PC-9 (cell line): ENCODE measurements at regions of chr20 and their contacts with region 1.

Region 1: DNA sequence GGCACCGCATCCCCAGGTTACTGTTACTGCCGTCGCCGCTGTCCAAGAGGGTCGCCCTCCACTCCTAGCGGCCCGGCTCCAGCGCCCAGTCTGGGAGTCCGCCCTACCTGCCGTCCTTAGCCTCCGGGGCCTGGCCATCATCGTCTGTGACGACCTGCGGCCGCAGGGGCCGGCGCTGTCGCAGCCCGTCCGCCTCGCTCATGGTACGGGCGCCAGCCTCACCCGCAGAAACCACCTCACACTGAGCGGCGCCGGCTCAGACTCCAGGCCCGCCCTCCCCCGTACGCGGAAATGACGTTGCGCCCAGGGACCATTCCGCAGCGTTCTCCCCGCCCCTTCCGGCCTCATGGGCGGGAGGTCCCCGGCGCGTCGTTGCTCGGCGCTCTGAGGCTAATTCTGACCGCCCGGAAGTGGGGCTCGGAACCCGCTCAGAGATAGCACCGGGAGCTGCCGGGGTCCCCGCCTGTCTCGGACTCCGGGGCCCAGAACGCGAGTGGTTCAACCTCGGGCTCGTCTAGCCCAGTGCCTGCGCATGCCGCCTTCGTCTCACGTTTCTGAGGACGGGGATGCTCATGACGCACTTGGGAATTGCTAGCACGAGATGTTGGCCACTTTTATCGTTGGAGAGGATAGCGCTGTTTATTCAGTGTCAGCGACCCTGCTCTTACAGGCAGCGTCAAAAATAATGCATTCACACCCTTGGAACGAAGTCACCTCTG is at the start of gene APMAP:
- DNase-seq: peak; percentile 75 to 93
- H3K4me3 ChIP-seq: peak within 1 kb of the TSS; percentile 71
- H3K27ac ChIP-seq: peak within 1 kb of the TSS; percentile 54
- H3K4me1 ChIP-seq: peaks cover 49% of the 10 kb centered on the region
- H3K27me3 ChIP-seq: no peaks in the 10 kb centered on the region
- CTCF ChIP-seq: no peak
- total RNA-seq, gene APMAP: 96.6 and 103 TPM in 2 replicates

Region 2: DNA sequence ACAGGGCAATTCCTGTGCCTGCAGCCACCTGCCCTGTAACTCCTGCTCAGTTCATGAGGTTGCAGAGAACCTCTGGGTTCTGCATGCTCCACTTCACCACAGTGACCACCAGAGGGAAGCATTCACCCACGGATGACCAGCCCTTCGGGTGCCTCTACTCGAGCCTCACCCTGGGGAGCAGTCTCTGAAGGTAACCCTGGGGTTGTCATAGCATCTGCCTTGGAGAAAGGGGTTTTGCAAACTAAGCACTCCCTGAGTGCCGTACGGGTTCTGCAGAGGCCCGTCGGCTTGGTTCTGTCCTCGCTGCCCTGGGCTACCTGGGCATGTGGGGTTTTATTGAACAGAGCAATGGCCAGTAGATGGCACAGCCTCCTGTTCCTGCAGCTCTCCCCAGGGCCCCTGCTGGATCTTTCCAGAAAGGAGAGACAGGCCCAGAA is 1102.9 kb before region 1 on chr20:
- CTCF ChIA-PET with region 1: no interaction called
- POLR2A ChIA-PET with region 1: no interaction called
- intact Hi-C with region 1: loop called (anchors 2 kb)
- DNase-seq: peak; percentile 63 to 83
- H3K4me3 ChIP-seq: no peak overlapping the region; the same call in 1 of the 2 replicates
- H3K27ac ChIP-seq: no peak overlapping the region
- H3K4me1 ChIP-seq: peaks cover 14% of the 10 kb centered on the region
- H3K27me3 ChIP-seq: no peaks in the 10 kb centered on the region
- CTCF ChIP-seq: peak; percentile 96

Region 3: DNA sequence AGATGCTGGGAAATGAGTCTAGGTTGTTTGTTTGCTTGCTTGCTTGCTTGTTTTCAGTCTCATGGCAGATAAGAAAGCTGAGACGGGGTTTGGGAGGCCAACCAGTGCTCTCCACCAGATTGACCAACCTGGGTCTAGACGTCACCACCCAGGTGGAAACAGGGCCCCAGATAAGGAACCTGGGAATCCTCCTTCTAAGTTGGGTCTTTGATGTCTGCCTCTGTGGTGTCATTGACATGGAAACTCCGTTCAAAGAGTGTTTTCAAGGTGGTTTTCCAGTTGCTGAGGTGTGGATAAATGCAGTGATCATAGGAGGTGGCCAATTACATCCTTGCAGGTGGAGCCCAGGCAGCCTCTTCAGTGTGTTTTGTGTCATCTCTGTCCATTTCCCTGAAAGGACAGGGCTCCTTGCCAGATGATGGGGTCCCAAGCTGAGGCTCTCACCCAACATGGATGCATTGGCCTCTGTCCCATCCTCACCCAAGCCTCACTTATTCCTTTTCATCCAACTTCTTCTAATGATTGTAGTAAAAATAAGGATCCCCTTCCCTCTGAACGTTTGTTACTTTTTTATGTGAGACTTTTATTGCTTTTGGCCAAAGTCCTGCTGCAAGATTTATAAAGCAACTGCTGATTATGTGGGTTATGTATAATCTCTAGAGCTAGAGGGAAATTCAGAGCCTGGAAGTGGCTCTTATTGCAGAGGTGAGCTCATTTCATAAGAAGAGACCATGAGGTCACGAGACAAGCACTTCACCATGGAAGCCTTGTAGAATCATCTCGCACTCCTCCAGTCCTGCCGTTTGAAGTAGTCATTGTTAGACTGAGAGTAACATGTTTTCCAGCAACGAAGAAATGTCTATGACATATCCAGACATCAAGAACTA is 555.2 kb before region 1 on chr20:
- CTCF ChIA-PET with region 1: no interaction called
- POLR2A ChIA-PET with region 1: no interaction called
- intact Hi-C with region 1: no loop called
- DNase-seq: no peak
- H3K4me3 ChIP-seq: no peak overlapping the region
- H3K27ac ChIP-seq: no peak overlapping the region
- H3K4me1 ChIP-seq: no peaks in the 10 kb centered on the region
- H3K27me3 ChIP-seq: no peaks in the 10 kb centered on the region
- CTCF ChIP-seq: no peak

Region 4: GRCh38 chr20:24934101-24934661 is 58.5 kb before region 1 on chr20:
- CTCF ChIA-PET with region 1: interaction called, 3 read pairs
- POLR2A ChIA-PET with region 1: no interaction called
- intact Hi-C with region 1: loop called (anchors 1 kb)
- DNase-seq: no peak
- H3K4me3 ChIP-seq: no peak overlapping the region
- H3K27ac ChIP-seq: no peak overlapping the region
- H3K4me1 ChIP-seq: peaks cover 27% of the 10 kb centered on the region
- H3K27me3 ChIP-seq: no peaks in the 10 kb centered on the region
- CTCF ChIP-seq: no peak

Region 5: GRCh38 chr20:25195014-25195961 is 202.6 kb after region 1 on chr20 and contains the start of gene ENTPD6:
- CTCF ChIA-PET with region 1: no interaction called
- POLR2A ChIA-PET with region 1: no interaction called
- intact Hi-C with region 1: loop called (anchors 5 kb)
- DNase-seq: peak; percentile 68 to 96
- H3K4me3 ChIP-seq: peak within 1 kb of the TSS; percentile 93
- H3K27ac ChIP-seq: peak within 1 kb of the TSS; percentile 54
- H3K4me1 ChIP-seq: peaks cover 16% of the 10 kb centered on the region
- H3K27me3 ChIP-seq: no peaks in the 10 kb centered on the region
- CTCF ChIP-seq: no peak; the same call in 1 of the 2 replicates
- total RNA-seq, gene ENTPD6: 75.5 and 80.4 TPM in 2 replicates

Region 6: DNA sequence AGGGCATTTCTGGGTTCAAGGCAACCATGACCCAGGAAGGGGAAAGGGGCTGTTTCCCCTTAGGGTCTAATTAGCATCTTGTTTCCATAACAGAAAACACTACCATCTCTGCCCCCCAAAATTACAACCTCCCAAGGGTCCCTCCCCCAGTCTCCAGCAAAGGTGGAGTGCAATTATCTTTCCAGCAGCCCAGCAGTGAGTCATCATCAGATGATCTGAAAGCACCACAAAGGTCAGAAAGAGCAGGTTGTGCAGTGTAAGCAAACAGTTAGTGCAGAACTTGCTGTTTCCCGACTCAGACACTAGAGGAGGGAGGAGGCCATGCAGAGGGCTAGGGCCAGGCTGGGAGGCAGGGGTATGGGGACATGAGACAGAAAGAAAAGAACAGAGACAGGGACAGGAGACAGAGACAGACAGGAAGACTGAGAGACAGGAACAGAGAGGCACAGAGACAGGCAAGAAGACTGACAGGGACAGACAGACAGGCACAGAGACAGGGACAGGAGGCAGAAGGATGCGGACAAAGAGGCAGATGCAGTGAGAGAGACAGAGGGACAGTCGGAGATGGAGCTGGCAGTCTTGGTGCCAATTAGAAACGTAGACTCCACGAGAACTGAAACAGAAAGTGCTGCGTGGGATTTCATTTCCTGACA is 317.7 kb after region 1 on chr20:
- CTCF ChIA-PET with region 1: interaction called, 3 read pairs
- POLR2A ChIA-PET with region 1: no interaction called
- intact Hi-C with region 1: loop called (anchors 2 kb)
- DNase-seq: peak; percentile 71 to 91
- H3K4me3 ChIP-seq: peak overlapping the region; percentile 39; the same call in 1 of the 2 replicates
- H3K27ac ChIP-seq: peak overlapping the region; percentile 80
- H3K4me1 ChIP-seq: peaks cover 43% of the 10 kb centered on the region
- H3K27me3 ChIP-seq: no peaks in the 10 kb centered on the region
- CTCF ChIP-seq: peak; percentile 68

Region 7: DNA sequence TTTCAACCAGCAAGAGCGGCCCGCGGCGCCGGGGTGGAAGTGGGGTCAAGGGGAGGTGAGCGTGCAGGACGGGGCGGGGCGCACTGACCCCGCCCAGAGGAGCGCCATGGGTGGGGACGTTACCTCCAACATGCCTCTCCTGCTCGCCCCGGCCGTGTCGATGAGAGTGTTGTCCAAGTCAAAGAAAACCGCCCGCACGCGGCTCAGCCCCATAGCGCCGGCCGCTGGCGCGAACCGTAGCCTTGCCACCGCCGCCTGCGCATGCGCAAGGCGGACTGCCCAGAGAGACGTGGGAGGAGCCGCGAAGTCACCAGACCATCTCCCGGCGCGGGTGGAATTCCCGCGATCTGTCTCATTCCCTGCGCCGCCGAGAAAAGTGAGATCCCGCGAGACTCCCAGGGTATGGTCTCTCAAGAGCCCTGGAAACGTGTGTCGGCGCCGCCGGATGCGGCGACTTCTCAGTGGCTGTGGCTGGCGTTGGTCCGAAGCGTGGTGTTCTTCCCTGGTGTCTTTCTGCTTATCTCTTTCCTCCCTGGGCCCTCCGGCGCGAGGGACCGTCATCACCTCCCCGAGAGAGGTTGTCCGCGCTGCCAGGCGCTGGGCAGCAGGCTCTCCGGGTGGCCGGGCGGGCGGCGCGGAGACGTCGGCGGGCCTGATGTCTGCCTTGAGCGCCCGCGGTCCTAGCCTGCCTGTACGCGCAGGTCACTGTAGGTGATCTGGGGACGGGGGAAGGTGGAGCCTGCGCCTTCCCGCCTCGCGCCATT is 631.3 kb after region 1 on chr20 and contains the start of gene NANP:
- CTCF ChIA-PET with region 1: no interaction called
- POLR2A ChIA-PET with region 1: no interaction called
- intact Hi-C with region 1: loop called (anchors 5 kb)
- DNase-seq: peak; percentile 94 to 99
- H3K4me3 ChIP-seq: peak within 1 kb of the TSS; percentile 98
- H3K27ac ChIP-seq: peak within 1 kb of the TSS; percentile 97
- H3K4me1 ChIP-seq: peaks cover 26% of the 10 kb centered on the region
- H3K27me3 ChIP-seq: no peaks in the 10 kb centered on the region
- CTCF ChIP-seq: no peak
- total RNA-seq, gene NANP: 5.6 and 7.5 TPM in 2 replicates